Heart left ventricle (tissue), 16 donors: ENCODE measurements at regions of chr1 and their contacts with region 1.

Region 1: DNA sequence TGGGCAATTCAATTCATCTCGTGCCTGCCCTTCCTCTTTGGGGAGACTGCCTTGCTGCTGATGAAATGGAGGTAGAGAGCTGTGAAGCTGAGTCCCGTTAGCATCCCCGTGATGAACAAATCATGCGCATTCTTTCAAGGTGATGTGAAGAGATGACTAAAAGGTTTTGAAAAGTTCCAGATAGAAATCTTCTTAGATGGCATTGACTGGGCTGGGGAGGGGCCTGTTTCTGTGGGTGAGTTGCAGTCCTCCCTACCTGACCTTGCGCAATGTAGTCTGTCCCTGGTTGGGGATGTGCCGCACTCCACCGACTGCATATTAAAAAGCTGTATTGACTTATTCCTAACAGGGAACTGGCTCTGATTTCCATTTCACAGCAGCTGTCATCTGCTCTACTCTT is 49.6 kb downstream of the ST6GALNAC3 start:
- DNase-seq: no peak
- ATAC-seq: no peak
- H3K4me3 ChIP-seq: no peak overlapping the region
- H3K27ac ChIP-seq: no peak overlapping the region
- H3K4me1 ChIP-seq: peaks cover 0 to 14% (median 2%) of the 10 kb centered on the region in 12 donors
- H3K27me3 ChIP-seq: no peaks in the 10 kb centered on the region
- CTCF ChIP-seq: no peak
- POLR2A ChIP-seq: no peak

Region 2: DNA sequence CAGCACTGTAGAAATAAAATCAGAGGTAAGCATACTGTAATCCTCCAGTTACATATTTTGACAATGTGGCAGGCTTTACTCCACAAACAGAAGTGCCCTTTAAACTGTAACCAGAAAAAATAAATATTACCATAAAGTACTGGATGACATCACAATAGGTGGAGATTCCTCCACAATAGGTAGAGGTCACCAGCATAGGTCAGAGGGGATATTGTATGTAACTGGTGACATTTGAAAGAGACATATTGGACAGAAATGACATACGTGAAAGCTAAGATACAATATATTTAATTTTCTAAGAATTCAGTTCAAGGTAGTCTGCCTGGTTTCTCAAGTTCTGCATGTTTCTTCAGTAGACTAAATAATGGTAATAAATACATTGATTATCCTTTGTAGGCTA is 191.9 kb before region 1 on chr1 and contains the start of gene ASB17:
- intact Hi-C with region 1: no loop called
- DNase-seq: no peak
- ATAC-seq: no peak
- H3K4me3 ChIP-seq: no peak within 1 kb of the TSS
- H3K27ac ChIP-seq: no peak within 1 kb of the TSS
- H3K4me1 ChIP-seq: no peaks in the 10 kb centered on the region
- H3K27me3 ChIP-seq: no peaks in the 10 kb centered on the region
- CTCF ChIP-seq: no peak
- POLR2A ChIP-seq: no peak
- total RNA-seq, gene ASB17: not detected

Region 3: GRCh38 chr1:76083189-76083588 is 41.0 kb before region 1 on chr1:
- intact Hi-C with region 1: loop called in 1 of 10 experiments (anchors 2 kb)
- DNase-seq: no peak
- ATAC-seq: peak in 1 of 4 donors; percentile 45
- H3K4me3 ChIP-seq: no peak overlapping the region
- H3K27ac ChIP-seq: no peak overlapping the region
- H3K4me1 ChIP-seq: no peaks in the 10 kb centered on the region
- H3K27me3 ChIP-seq: no peaks in the 10 kb centered on the region
- CTCF ChIP-seq: no peak
- POLR2A ChIP-seq: no peak

Region 4: GRCh38 chr1:76176020-76176419 is 51.8 kb after region 1 on chr1:
- intact Hi-C with region 1: loop called in 1 of 10 experiments (anchors 2 kb)
- DNase-seq: no peak
- ATAC-seq: no peak
- H3K4me3 ChIP-seq: no peak overlapping the region
- H3K27ac ChIP-seq: no peak overlapping the region
- H3K4me1 ChIP-seq: no peaks in the 10 kb centered on the region
- H3K27me3 ChIP-seq: no peaks in the 10 kb centered on the region
- CTCF ChIP-seq: no peak
- POLR2A ChIP-seq: no peak